GM12878 (cell line): ENCODE measurements at regions of chr11 and their contacts with region 1.

Region 1: DNA sequence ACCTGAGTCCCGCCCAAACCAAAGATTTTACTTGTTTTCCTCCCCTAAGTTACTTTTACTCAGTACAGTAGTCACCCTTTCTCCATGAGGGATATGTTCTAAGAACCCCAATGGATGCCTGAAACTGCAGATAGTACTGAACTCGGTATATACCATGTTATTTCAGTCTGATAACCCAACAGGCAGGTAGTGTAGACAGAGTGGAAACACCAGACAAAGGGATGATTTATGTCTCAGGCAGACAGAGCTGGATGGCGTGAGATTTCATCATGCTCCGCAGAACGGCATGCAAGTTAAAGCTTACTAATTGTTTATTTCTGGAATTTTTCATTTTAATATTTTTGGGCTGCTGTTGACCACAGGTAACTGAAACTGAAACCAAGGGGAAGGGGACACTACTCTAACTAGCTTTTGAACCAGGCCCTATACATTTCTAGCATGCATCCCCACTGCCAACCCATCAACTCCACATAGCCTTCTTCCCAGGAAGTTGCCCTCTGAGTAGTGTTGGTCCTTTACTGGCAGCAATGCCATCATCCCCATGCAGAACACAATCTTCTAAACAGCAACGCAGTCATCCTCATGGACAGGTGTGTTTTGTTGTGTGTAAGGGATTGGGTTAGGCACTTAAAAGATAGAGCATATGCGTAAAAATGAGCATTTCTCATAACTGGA is 27.7 kb downstream of the CSRP3 start:
- DNase-seq: no peak
- ATAC-seq: no peak
- H3K4me3 ChIP-seq: no peak overlapping the region
- H3K27ac ChIP-seq: no peak overlapping the region
- H3K4me1 ChIP-seq: peaks cover 8% of the 10 kb centered on the region; the same call in 1 of the 2 replicates
- H3K27me3 ChIP-seq: no peaks in the 10 kb centered on the region
- CTCF ChIP-seq: no peak
- EP300 ChIP-seq: no peak
- POLR2A ChIP-seq: no peak
- RAD21 ChIP-seq: no peak

Region 2: GRCh38 chr11:19240420-19241259 is 66.5 kb after region 1 on chr11 and contains the start of gene E2F8:
- CTCF ChIA-PET with region 1: no interaction called
- POLR2A ChIA-PET with region 1: no interaction called
- RAD21 ChIA-PET with region 1: interaction called, 3 read pairs
- SMC1A ChIA-PET with region 1: interaction called, 3 read pairs
- in situ Hi-C with region 1: no loop called
- intact Hi-C with region 1: loop called (anchors 2 kb)
- DNase-seq: peak; percentile 88
- ATAC-seq: peak; percentile 87
- H3K4me3 ChIP-seq: peak within 1 kb of the TSS; percentile 92
- H3K27ac ChIP-seq: peak within 1 kb of the TSS; percentile 91
- H3K4me1 ChIP-seq: peaks cover 22% of the 10 kb centered on the region
- H3K27me3 ChIP-seq: no peaks in the 10 kb centered on the region
- CTCF ChIP-seq: no peak
- EP300 ChIP-seq: peak in 1 of 2 experiments; percentile 64; a peak in 1 of 4 replicates
- POLR2A ChIP-seq: peak; percentile 20; the same call in 1 of the 2 replicates
- RAD21 ChIP-seq: no peak
- polyA plus RNA-seq, gene E2F8: 8.8 to 9.2 TPM